CD4-positive, alpha-beta T cell (primary cell): ENCODE measurements at regions of chr4 and their contacts with region 1.

Region 1: GRCh38 chr4:123396307-123397143 is at the start of gene SPRY1:
- DNase-seq: peak in 13 of 14 experiments; percentile 38 to 87 (median 62)
- ATAC-seq: peak; percentile 67
- H3K4me3 ChIP-seq: peak within 1 kb of the TSS; percentile 75
- H3K4me3 Mint-ChIP-seq: peak within 1 kb of the TSS; percentile 90
- H3K27ac ChIP-seq: no peak within 1 kb of the TSS
- H3K27ac Mint-ChIP-seq: peak within 1 kb of the TSS; percentile 70
- H3K4me1 ChIP-seq: peaks cover 33% of the 10 kb centered on the region
- H3K4me1 Mint-ChIP-seq: peaks cover 30% of the 10 kb centered on the region
- H3K27me3 ChIP-seq: peaks cover 4 to 11% of the 10 kb centered on the region in 2 experiments
- H3K27me3 Mint-ChIP-seq: peaks cover 25% of the 10 kb centered on the region
- CTCF ChIP-seq: no peak
- total RNA-seq, gene SPRY1: 19.6 to 20.3 TPM

Region 2: DNA sequence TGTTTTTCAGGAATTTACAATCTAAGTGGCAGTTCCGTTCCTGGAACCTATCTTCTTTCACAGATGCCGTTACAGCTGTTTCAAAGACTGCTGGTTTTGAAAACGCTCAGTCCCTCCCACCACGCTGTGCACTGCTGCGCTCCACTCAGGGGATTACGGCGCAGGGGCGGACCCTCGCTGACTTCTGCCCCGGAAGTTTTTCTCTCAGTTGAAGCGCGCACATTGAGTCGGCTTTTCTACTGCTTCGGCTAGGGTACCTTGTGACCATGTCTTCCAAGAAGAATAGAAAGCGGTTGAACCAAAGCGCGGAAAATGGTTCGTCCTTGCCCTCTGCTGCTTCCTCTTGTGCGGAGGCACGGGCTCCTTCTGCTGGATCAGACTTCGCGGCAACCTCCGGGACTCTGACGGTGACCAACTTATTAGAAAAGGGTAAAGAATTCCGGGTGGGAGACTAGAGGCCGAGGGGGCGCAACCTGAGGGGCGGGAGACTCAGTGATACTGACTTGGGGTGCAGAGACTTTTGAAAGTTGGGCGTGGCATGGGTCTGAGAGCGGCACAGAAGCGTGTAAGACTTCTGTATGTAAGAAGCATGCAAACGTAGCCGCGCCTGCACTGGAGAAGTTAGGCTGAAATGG is 473.5 kb before region 1 on chr4:
- CTCF ChIA-PET with region 1: no interaction called
- POLR2A ChIA-PET with region 1: no interaction called
- intact Hi-C with region 1: loop called in 1 of 2 experiments (anchors 5 kb)
- DNase-seq: peak; percentile 68 to 93 (median 84)
- ATAC-seq: peak; percentile 98
- H3K4me3 ChIP-seq: peak overlapping the region; percentile 69
- H3K4me3 Mint-ChIP-seq: peak overlapping the region; percentile 98
- H3K27ac ChIP-seq: peak overlapping the region; percentile 57 to 62
- H3K27ac Mint-ChIP-seq: no peak overlapping the region
- H3K4me1 ChIP-seq: peaks cover 9% of the 10 kb centered on the region
- H3K4me1 Mint-ChIP-seq: peaks cover 8% of the 10 kb centered on the region
- H3K27me3 ChIP-seq: no peaks in the 10 kb centered on the region
- H3K27me3 Mint-ChIP-seq: no peaks in the 10 kb centered on the region
- CTCF ChIP-seq: no peak

Region 3: DNA sequence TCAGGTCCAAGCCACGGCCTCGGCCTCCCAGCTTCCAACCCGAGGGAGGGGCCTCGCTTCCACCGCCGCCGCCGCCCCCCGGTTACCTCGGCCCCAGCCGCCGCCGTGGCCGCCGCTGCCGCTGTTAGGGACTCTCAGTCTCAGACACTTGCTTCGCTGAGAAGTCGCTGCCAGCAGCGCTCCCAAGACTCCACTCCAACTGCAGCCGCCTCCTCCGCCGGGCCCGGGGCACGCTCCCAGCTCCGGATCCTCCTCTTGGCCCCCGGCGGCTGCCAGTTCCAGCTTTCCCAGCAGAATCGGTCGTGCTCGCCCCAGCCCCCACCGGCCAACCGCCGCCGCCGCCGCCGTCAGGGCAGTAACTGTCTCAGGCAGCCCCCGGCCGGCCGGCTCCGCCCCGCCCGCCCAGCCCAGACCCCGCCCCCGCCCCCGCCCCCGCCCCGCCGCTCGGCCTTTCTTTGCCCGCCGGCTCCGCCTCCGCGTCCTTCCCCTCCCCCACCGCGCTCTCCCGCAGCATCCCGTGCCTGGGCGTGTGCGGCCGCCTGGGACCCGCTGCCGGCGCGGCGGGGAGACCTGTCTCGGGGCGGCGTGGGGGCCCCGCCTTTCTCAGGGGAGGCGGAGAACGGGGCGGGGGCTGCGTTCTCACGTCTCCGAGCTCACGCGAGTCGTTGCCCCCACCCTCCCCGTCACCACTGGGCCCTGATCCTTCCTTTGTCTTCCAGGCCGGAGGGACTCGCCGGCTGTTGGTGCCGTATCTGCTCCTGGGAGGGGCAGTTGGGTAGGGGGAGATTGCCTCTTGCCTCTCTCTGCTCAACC is 1316.1 kb after region 1 on chr4 and contains the start of gene ANKRD50:
- CTCF ChIA-PET with region 1: no interaction called
- POLR2A ChIA-PET with region 1: no interaction called
- intact Hi-C with region 1: loop called in 1 of 2 experiments (anchors 10 kb)
- DNase-seq: peak; percentile 15 to 85 (median 59)
- ATAC-seq: peak; percentile 82
- H3K4me3 ChIP-seq: peak within 1 kb of the TSS; percentile 61
- H3K4me3 Mint-ChIP-seq: peak within 1 kb of the TSS; percentile 96
- H3K27ac ChIP-seq: peak within 1 kb of the TSS in 1 of 2 donors; percentile 19
- H3K27ac Mint-ChIP-seq: peak within 1 kb of the TSS; percentile 70
- H3K4me1 ChIP-seq: peaks cover 16% of the 10 kb centered on the region
- H3K4me1 Mint-ChIP-seq: peaks cover 8% of the 10 kb centered on the region
- H3K27me3 ChIP-seq: peaks cover 0 to 8% of the 10 kb centered on the region in 2 experiments
- H3K27me3 Mint-ChIP-seq: no peaks in the 10 kb centered on the region
- CTCF ChIP-seq: no peak
- total RNA-seq, gene ANKRD50: 0.27 to 0.36 TPM